GM10248 (cell line): ENCODE measurements at regions of chr15 and their contacts with region 1.

Region 1: GRCh38 chr15:82849556-82850512 is 40.4 kb downstream of the WHAMM start:
- DNase-seq: peak; percentile 78
- CTCF ChIP-seq: peak; percentile 70

Region 2: GRCh38 chr15:82832601-82833361 is 17.1 kb before region 1 on chr15:
- CTCF ChIA-PET with region 1: interaction called, 14 read pairs
- POLR2A ChIA-PET with region 1: no interaction called
- DNase-seq: peak; percentile 73
- CTCF ChIP-seq: no peak

Region 3: GRCh38 chr15:82862886-82863285 is 13.1 kb after region 1 on chr15:
- CTCF ChIA-PET with region 1: interaction called, 20 read pairs
- POLR2A ChIA-PET with region 1: no interaction called
- DNase-seq: no peak
- CTCF ChIP-seq: no peak